Activated T-helper 2 cell treated with anti-CD3 and anti-CD28 coated beads, Interferon-gamma antibody, Interleukin-2, Interleukin-4, amounts not matched to agents 10 μg/mL and 5 μg/mL and 100 μg/mL, durations not matched to agents 14 hours and 24 hours and 36 hours (primary cell): ENCODE measurements at regions of chrX and their contacts with region 1.

Region 1: GRCh38 chrX:106894392-106894909 is 8.7 kb downstream of the RIPPLY1 start:
- DNase-seq: peak; percentile 11
- H3K4me3 Mint-ChIP-seq: no peak overlapping the region
- H3K27ac Mint-ChIP-seq: no peak overlapping the region
- H3K4me1 Mint-ChIP-seq: no peaks in the 10 kb centered on the region
- H3K27me3 Mint-ChIP-seq: no peaks in the 10 kb centered on the region

Region 2: GRCh38 chrX:106566362-106566761 is 328.1 kb before region 1 on chrX:
- intact Hi-C with region 1: no loop called
- DNase-seq: no peak
- H3K4me3 Mint-ChIP-seq: no peak overlapping the region
- H3K27ac Mint-ChIP-seq: no peak overlapping the region
- H3K4me1 Mint-ChIP-seq: no peaks in the 10 kb centered on the region
- H3K27me3 Mint-ChIP-seq: peaks cover 8% of the 10 kb centered on the region

Region 3: GRCh38 chrX:106670631-106671030 is 223.8 kb before region 1 on chrX:
- intact Hi-C with region 1: no loop called
- DNase-seq: no peak
- H3K4me3 Mint-ChIP-seq: no peak overlapping the region
- H3K27ac Mint-ChIP-seq: no peak overlapping the region
- H3K4me1 Mint-ChIP-seq: no peaks in the 10 kb centered on the region
- H3K27me3 Mint-ChIP-seq: no peaks in the 10 kb centered on the region

Region 4: DNA sequence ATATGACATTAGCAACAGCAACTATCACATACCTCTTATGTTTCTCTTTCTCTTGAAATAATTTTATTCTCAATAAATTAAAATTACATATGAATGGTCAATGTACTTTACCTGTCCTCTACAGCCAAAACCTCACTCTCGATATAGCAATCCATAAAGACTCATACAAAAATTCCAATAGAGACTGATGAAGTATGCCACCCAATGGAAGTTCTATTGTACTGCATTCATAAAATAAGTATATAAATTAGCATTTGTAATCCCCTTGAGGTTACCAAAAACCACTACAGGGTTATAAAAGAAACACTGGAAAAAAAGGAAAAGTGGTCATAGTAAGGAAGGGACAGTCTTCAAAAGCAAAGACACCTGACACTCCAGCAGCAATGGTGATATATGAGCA is 58.5 kb after region 1 on chrX:
- intact Hi-C with region 1: loop called (anchors 2 kb)
- DNase-seq: no peak
- H3K4me3 Mint-ChIP-seq: no peak overlapping the region
- H3K27ac Mint-ChIP-seq: no peak overlapping the region
- H3K4me1 Mint-ChIP-seq: no peaks in the 10 kb centered on the region
- H3K27me3 Mint-ChIP-seq: no peaks in the 10 kb centered on the region

Region 5: DNA sequence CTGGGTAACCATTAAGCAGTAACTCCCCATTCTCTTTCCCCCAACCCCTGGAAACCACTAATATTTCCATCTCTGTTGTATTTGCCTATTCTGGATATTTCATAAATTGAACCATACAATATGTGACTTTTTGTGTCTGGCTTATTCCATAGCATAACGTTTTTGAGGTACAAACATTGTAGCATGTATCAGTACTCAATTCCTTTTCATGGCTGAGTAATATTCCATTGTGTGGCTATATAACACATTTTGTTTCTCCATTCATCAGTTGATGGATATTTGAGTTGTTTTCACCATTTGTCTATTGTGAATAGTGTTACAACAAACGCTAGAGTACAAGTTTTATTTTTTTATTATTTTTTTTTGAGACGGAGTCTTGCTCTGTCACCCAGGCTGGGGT is 160.5 kb after region 1 on chrX:
- intact Hi-C with region 1: no loop called
- DNase-seq: no peak
- H3K4me3 Mint-ChIP-seq: no peak overlapping the region
- H3K27ac Mint-ChIP-seq: no peak overlapping the region
- H3K4me1 Mint-ChIP-seq: no peaks in the 10 kb centered on the region
- H3K27me3 Mint-ChIP-seq: no peaks in the 10 kb centered on the region

Region 6: DNA sequence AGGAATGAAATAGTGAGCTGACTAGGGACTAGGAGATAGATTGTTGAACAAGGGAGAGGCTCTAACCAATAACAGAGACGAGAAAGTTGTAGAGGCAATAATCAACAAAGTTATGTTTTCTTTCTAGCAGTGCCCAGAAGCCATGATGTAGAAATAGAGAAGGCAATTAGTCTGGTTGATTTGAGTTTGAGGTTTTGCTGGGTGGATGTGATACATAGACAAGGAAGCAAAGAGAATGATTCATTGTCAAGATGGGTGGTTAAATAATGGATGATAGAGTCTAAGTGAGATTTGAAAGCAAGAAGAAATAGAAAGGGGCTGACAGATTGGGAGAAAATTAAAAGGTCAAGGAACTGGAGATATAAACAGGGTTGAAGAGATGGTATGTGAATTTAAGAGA is 213.0 kb after region 1 on chrX:
- intact Hi-C with region 1: no loop called
- DNase-seq: no peak
- H3K4me3 Mint-ChIP-seq: no peak overlapping the region
- H3K27ac Mint-ChIP-seq: no peak overlapping the region
- H3K4me1 Mint-ChIP-seq: peaks cover 11% of the 10 kb centered on the region
- H3K27me3 Mint-ChIP-seq: no peaks in the 10 kb centered on the region

Region 7: DNA sequence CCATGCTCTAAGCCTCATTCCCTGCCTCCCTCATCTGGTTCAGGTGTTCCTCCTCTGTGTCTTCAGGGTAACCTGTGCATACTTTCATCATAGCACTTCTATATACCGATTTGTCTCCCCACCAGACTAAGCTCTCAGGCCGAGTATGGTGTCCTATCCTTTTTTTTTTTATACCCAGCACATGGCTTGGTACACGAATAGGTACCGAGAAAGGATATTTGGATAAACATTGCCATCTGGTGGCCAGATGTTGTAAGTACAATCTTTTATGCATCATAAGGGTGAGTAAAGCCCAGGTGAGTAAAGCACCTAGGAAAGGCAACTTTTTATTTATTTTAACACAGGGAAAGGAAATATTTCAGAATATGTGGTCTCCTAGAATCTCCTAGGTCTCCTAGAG is 999.6 kb after region 1 on chrX:
- intact Hi-C with region 1: loop called (anchors 10 kb)
- DNase-seq: no peak
- H3K4me3 Mint-ChIP-seq: no peak overlapping the region
- H3K27ac Mint-ChIP-seq: no peak overlapping the region
- H3K4me1 Mint-ChIP-seq: no peaks in the 10 kb centered on the region
- H3K27me3 Mint-ChIP-seq: peaks cover 1% of the 10 kb centered on the region